CD4-positive, alpha-beta memory T cell (primary cell): ENCODE measurements at regions of chr22 and their contacts with region 1.

Region 1: GRCh38 chr22:40346178-40347118 is at the start of gene ADSL:
- DNase-seq: peak; percentile 81 to 86 (median 84)
- H3K4me3 ChIP-seq: peak within 1 kb of the TSS; percentile 91 to 95
- H3K4me3 Mint-ChIP-seq: peak within 1 kb of the TSS; percentile 92 to 99 (median 98)
- H3K27ac ChIP-seq: peak within 1 kb of the TSS; percentile 81
- H3K27ac Mint-ChIP-seq: peak within 1 kb of the TSS; percentile 92 to 99 (median 98)
- H3K4me1 ChIP-seq: peaks cover 63% of the 10 kb centered on the region
- H3K4me1 Mint-ChIP-seq: peaks cover 37 to 70% (median 51%) of the 10 kb centered on the region in 4 donors
- H3K27me3 ChIP-seq: no peaks in the 10 kb centered on the region
- H3K27me3 Mint-ChIP-seq: no peaks in the 10 kb centered on the region
- total RNA-seq, gene ADSL: 63.3 to 81.1 TPM

Region 2: DNA sequence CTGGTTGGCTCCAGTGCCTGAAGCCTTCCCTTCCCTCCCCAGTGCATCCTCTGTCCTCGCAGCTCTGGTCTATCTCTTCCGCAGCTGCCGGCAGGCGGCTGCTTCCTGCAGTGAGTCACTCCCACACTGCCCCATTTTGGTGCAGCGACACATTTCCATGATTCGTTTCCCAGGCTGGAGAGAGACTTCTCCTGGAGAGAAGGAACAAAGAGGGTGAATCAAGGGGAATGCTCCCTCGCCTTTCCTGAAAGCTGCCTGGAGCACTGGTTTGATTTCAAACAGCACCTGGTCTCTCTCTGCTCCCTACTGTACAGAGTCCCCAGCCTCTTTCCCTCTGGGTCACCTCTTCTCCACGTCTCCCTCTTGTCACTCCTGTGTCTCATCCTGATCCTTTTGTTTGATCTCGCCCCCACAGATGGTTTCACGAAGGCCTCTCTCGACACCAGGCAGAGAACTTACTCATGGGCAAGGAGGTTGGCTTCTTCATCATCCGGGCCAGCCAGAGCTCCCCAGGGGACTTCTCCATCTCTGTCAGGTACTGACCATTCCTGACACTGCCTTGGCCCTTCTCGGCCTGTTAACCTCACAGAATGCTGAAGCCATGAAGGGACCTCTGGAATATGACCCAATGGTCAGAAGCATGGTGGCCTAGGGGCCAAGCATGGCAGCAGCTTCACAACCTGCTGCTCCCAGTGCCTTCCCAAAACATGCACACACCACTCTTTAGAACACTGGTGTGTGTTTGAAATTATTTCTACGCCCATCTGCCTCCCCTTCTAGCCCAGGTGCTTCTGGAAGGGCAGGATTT is 386.6 kb before region 1 on chr22 and contains the start of gene TMA7B:
- CTCF ChIA-PET with region 1: interaction called, 5 read pairs
- POLR2A ChIA-PET with region 1: no interaction called
- intact Hi-C with region 1: loop called (anchors 5 kb)
- DNase-seq: peak in 3 of 5 donors; percentile 35 to 66 (median 36)
- H3K4me3 ChIP-seq: no peak within 1 kb of the TSS
- H3K4me3 Mint-ChIP-seq: peak within 1 kb of the TSS in 7 of 8 donors; percentile 23 to 59 (median 37)
- H3K27ac ChIP-seq: peak within 1 kb of the TSS; percentile 53
- H3K27ac Mint-ChIP-seq: peak within 1 kb of the TSS; percentile 61 to 96 (median 90)
- H3K4me1 ChIP-seq: peaks cover 64% of the 10 kb centered on the region
- H3K4me1 Mint-ChIP-seq: peaks cover 48 to 68% (median 60%) of the 10 kb centered on the region in 4 donors
- H3K27me3 ChIP-seq: no peaks in the 10 kb centered on the region
- H3K27me3 Mint-ChIP-seq: no peaks in the 10 kb centered on the region
- total RNA-seq, gene TMA7B: 9.3 to 10.2 TPM

Region 3: DNA sequence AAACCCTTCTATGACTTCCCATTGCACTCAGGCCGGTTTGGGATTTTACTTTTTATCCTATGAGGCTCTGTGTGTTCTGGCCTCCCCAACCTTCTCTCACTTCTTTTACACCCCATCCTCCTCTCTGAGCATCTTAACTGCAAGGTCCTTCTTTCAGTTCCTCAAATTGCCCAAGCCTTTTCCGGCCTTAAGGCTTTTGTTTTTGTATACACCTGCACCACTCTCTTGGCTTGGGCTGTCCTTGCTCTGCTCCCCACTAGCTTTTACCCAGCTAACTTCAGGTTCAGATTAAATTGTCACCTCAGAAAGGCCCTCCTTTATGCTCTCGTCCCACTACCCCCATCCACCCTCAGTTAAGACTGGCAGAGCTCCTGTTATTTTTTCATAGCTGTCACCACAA is 296.2 kb before region 1 on chr22:
- CTCF ChIA-PET with region 1: interaction called, 22 read pairs
- POLR2A ChIA-PET with region 1: interaction called, 101 read pairs
- intact Hi-C with region 1: loop called (anchors 2 kb)
- DNase-seq: no peak
- H3K4me3 ChIP-seq: no peak overlapping the region
- H3K4me3 Mint-ChIP-seq: peak overlapping the region in 7 of 8 donors; percentile 13 to 70 (median 47)
- H3K27ac ChIP-seq: no peak overlapping the region
- H3K27ac Mint-ChIP-seq: peak overlapping the region in 5 of 7 donors; percentile 9 to 76 (median 61)
- H3K4me1 ChIP-seq: peaks cover 83% of the 10 kb centered on the region
- H3K4me1 Mint-ChIP-seq: peaks cover 54 to 86% (median 71%) of the 10 kb centered on the region in 4 donors
- H3K27me3 ChIP-seq: no peaks in the 10 kb centered on the region
- H3K27me3 Mint-ChIP-seq: no peaks in the 10 kb centered on the region

Region 4: DNA sequence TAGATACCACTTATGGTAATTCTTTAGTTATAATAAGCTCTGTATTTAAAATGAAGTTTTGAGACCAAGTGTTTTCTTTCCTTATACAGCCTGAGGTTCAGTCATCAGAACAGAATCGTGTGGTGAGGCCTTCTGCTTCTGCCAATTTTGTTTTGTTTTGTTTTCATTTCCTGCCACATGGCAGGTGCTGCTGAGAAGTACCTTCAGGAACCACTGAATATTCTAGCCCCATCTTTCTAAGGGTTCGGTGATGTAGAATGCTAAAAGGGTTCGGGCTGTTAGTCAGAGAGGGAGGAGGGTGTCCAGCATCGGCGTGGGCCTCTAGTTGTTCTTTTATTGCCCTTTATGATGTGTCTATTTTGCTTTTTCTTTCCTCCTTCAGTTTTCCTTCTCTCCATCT is 142.9 kb before region 1 on chr22:
- CTCF ChIA-PET with region 1: interaction called, 17 read pairs
- POLR2A ChIA-PET with region 1: interaction called, 5 read pairs
- intact Hi-C with region 1: no loop called
- DNase-seq: peak; percentile 45 to 68 (median 58)
- H3K4me3 ChIP-seq: no peak overlapping the region
- H3K4me3 Mint-ChIP-seq: peak overlapping the region; percentile 5 to 85 (median 66)
- H3K27ac ChIP-seq: no peak overlapping the region
- H3K27ac Mint-ChIP-seq: peak overlapping the region; percentile 82 to 96 (median 93)
- H3K4me1 ChIP-seq: peaks cover 62% of the 10 kb centered on the region
- H3K4me1 Mint-ChIP-seq: peaks cover 47 to 76% (median 67%) of the 10 kb centered on the region in 4 donors
- H3K27me3 ChIP-seq: no peaks in the 10 kb centered on the region
- H3K27me3 Mint-ChIP-seq: no peaks in the 10 kb centered on the region

Region 5: DNA sequence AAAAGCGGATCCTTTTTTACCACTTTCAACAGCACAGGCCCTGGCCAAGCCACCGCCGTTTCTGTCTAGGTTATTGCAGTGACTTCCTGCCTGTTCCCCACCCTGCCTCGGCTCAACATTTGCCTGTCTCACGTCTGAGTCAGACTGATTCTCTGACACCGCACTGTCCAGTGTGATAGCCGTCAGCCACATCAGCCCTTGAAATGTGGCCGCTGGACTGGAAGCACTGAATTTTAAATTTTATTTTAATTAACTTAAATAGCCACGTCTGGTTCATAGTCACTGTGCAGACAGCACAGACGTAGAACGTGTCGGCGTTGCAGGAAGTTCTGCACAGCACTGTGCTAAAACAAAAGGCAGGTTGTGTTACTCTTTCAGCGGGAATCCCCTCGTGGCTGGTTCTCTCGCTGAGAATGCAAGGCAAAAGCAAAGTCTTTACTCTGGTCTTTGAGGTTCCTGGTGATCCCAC is 56.4 kb before region 1 on chr22:
- CTCF ChIA-PET with region 1: interaction called, 12 read pairs
- POLR2A ChIA-PET with region 1: interaction called, 33 read pairs
- intact Hi-C with region 1: loop called (anchors 1 kb)
- DNase-seq: peak; percentile 69 to 89 (median 75)
- H3K4me3 ChIP-seq: no peak overlapping the region
- H3K4me3 Mint-ChIP-seq: peak overlapping the region; percentile 13 to 86 (median 78)
- H3K27ac ChIP-seq: peak overlapping the region; percentile 91
- H3K27ac Mint-ChIP-seq: peak overlapping the region; percentile 95 to 99 (median 97)
- H3K4me1 ChIP-seq: peaks cover 66% of the 10 kb centered on the region
- H3K4me1 Mint-ChIP-seq: peaks cover 43 to 73% (median 58%) of the 10 kb centered on the region in 4 donors
- H3K27me3 ChIP-seq: no peaks in the 10 kb centered on the region
- H3K27me3 Mint-ChIP-seq: no peaks in the 10 kb centered on the region

Region 6: GRCh38 chr22:40332319-40332781 is 14.1 kb before region 1 on chr22:
- CTCF ChIA-PET with region 1: interaction called, 123 read pairs
- POLR2A ChIA-PET with region 1: interaction called, 144 read pairs
- intact Hi-C with region 1: loop called (anchors 1 kb)
- DNase-seq: peak in 4 of 5 donors; percentile 29 to 56 (median 39)
- H3K4me3 ChIP-seq: peak overlapping the region; percentile 17 to 18
- H3K4me3 Mint-ChIP-seq: peak overlapping the region; percentile 11 to 80 (median 71)
- H3K27ac ChIP-seq: peak overlapping the region; percentile 32
- H3K27ac Mint-ChIP-seq: peak overlapping the region; percentile 77 to 95 (median 90)
- H3K4me1 ChIP-seq: peaks cover 98% of the 10 kb centered on the region
- H3K4me1 Mint-ChIP-seq: peaks cover 71 to 99% (median 87%) of the 10 kb centered on the region in 4 donors
- H3K27me3 ChIP-seq: no peaks in the 10 kb centered on the region
- H3K27me3 Mint-ChIP-seq: no peaks in the 10 kb centered on the region

Region 7: DNA sequence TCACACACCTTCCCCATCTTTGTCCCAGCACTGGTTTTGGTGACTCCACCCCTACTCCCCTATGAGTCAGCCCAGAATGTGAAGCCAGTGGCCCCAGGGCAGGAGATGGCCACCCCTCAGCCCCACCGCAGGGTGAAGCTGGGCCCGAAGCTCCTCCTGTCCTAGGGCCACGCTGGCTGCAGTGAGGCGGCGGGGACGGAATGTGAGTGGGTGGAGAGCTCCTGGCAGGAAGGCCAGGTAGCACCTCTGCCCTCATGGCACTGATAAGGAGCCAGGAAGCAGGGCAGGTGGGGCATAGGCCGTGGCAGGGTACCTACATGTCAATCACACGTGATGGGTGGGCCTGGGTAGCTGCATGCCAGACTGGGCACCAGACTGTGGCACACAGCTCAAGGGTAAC is 63.9 kb after region 1 on chr22:
- CTCF ChIA-PET with region 1: no interaction called
- POLR2A ChIA-PET with region 1: no interaction called
- intact Hi-C with region 1: no loop called
- DNase-seq: no peak
- H3K4me3 ChIP-seq: no peak overlapping the region
- H3K4me3 Mint-ChIP-seq: no peak overlapping the region
- H3K27ac ChIP-seq: no peak overlapping the region
- H3K27ac Mint-ChIP-seq: peak overlapping the region in 1 of 7 donors; percentile 10
- H3K4me1 ChIP-seq: peaks cover 4% of the 10 kb centered on the region
- H3K4me1 Mint-ChIP-seq: peaks cover 8 to 22% (median 15%) of the 10 kb centered on the region in 4 donors
- H3K27me3 ChIP-seq: no peaks in the 10 kb centered on the region
- H3K27me3 Mint-ChIP-seq: no peaks in the 10 kb centered on the region